Activated B cell treated with CpG ODN at 0.5 μM for 24 hours (primary cell): ENCODE measurements at regions of chr19 and their contacts with region 1.

Region 1: DNA sequence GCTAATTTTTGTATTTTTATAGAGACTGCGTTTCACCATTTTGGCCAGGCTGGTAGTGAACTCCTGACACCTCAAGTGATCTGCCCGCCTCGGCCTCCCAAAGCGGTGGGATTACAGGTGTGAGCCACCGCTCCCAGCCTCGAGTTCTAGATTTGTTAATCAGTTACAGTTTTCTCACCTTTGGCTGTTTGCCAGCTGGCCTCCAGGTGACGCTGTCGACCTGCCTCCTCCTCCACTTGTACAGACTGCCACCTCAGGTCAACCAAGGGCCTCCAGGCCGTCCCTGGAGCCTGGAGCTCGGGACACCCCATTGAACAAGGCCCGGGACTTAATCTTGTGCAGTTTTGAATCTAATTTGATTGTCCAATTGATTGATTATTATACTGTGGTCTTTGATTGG is 45.5 kb downstream of the IER2 start:
- DNase-seq: peak; percentile 57
- ATAC-seq: peak; percentile 79
- H3K4me3 Mint-ChIP-seq: no peak overlapping the region
- H3K27ac Mint-ChIP-seq: peak overlapping the region; percentile 63
- H3K4me1 Mint-ChIP-seq: peaks cover 29% of the 10 kb centered on the region
- H3K27me3 Mint-ChIP-seq: no peaks in the 10 kb centered on the region
- CTCF ChIP-seq: no peak

Region 2: GRCh38 chr19:12610540-12611360 is 584.9 kb before region 1 on chr19 and contains the starts of genes ZNF490 and ZNF791:
- CTCF ChIA-PET with region 1: no interaction called
- POLR2A ChIA-PET with region 1: no interaction called
- intact Hi-C with region 1: no loop called
- DNase-seq: peak; percentile 89
- ATAC-seq: peak; percentile 80
- H3K4me3 Mint-ChIP-seq: peak within 1 kb of the TSS; percentile 100
- H3K27ac Mint-ChIP-seq: peak within 1 kb of the TSS; percentile 100
- H3K4me1 Mint-ChIP-seq: peaks cover 66% of the 10 kb centered on the region
- H3K27me3 Mint-ChIP-seq: no peaks in the 10 kb centered on the region
- CTCF ChIP-seq: no peak
- total RNA-seq, gene ZNF490: 15.6 TPM in 2 replicates
- total RNA-seq, gene ZNF791: 37.5 and 46.1 TPM in 2 replicates

Region 3: GRCh38 chr19:12974301-12975220 is 221.1 kb before region 1 on chr19:
- CTCF ChIA-PET with region 1: interaction called, 6 read pairs
- POLR2A ChIA-PET with region 1: no interaction called
- intact Hi-C with region 1: loop called (anchors 5 kb)
- DNase-seq: no peak
- ATAC-seq: no peak
- H3K4me3 Mint-ChIP-seq: no peak overlapping the region
- H3K27ac Mint-ChIP-seq: no peak overlapping the region
- H3K4me1 Mint-ChIP-seq: peaks cover 6% of the 10 kb centered on the region
- H3K27me3 Mint-ChIP-seq: peaks cover 7% of the 10 kb centered on the region
- CTCF ChIP-seq: no peak

Region 4: GRCh38 chr19:13172068-13172896 is 23.4 kb before region 1 on chr19:
- CTCF ChIA-PET with region 1: interaction called, 33 read pairs
- POLR2A ChIA-PET with region 1: interaction called, 46 read pairs
- intact Hi-C with region 1: loop called (anchors 1 kb)
- DNase-seq: no peak
- ATAC-seq: peak; percentile 16
- H3K4me3 Mint-ChIP-seq: peak overlapping the region; percentile 69
- H3K27ac Mint-ChIP-seq: peak overlapping the region; percentile 88
- H3K4me1 Mint-ChIP-seq: peaks cover 76% of the 10 kb centered on the region
- H3K27me3 Mint-ChIP-seq: no peaks in the 10 kb centered on the region
- CTCF ChIP-seq: no peak

Region 5: DNA sequence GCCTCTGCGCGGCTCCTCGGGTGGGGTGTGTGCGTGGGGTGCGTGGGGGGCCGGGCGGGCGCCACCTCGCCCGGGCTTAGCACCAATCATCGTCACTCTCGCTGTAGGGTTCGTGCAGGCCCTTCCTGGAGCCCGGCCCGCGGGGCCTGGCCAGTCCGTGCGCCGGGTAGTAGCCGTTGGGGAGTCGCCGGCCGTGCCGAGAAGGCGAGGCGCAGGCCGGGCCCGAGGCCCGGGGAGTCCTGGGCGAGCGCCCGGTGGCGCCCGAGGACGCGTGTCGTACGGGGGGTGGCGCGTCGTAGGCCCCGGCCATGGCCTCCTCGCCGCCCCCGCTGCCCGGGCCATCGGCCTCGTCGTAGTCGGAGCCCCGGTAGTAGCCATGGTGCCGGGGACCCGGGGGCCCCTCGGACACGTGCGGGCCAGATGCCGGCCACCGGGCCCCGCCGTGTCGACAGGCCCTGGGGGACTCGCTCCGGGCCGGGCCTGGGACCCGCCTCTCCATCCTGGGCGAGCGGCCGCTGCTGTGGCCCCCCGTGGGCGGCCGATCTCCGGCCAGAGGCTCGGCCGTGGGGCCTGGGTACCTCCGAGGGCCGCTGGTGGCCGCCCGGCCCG is 11.7 kb after region 1 on chr19:
- CTCF ChIA-PET with region 1: interaction called, 10 read pairs
- POLR2A ChIA-PET with region 1: interaction called, 12 read pairs
- intact Hi-C with region 1: loop called (anchors 1 kb)
- DNase-seq: no peak
- ATAC-seq: no peak
- H3K4me3 Mint-ChIP-seq: no peak overlapping the region
- H3K27ac Mint-ChIP-seq: no peak overlapping the region
- H3K4me1 Mint-ChIP-seq: peaks cover 48% of the 10 kb centered on the region
- H3K27me3 Mint-ChIP-seq: no peaks in the 10 kb centered on the region
- CTCF ChIP-seq: no peak

Region 6: GRCh38 chr19:13234518-13234917 is 38.8 kb after region 1 on chr19:
- CTCF ChIA-PET with region 1: interaction called, 4 read pairs
- POLR2A ChIA-PET with region 1: no interaction called
- intact Hi-C with region 1: loop called (anchors 1 kb)
- DNase-seq: peak; percentile 27
- ATAC-seq: peak; percentile 90
- H3K4me3 Mint-ChIP-seq: peak overlapping the region; percentile 56
- H3K27ac Mint-ChIP-seq: peak overlapping the region; percentile 12
- H3K4me1 Mint-ChIP-seq: peaks cover 12% of the 10 kb centered on the region
- H3K27me3 Mint-ChIP-seq: peaks cover 6% of the 10 kb centered on the region
- CTCF ChIP-seq: no peak

Region 7: DNA sequence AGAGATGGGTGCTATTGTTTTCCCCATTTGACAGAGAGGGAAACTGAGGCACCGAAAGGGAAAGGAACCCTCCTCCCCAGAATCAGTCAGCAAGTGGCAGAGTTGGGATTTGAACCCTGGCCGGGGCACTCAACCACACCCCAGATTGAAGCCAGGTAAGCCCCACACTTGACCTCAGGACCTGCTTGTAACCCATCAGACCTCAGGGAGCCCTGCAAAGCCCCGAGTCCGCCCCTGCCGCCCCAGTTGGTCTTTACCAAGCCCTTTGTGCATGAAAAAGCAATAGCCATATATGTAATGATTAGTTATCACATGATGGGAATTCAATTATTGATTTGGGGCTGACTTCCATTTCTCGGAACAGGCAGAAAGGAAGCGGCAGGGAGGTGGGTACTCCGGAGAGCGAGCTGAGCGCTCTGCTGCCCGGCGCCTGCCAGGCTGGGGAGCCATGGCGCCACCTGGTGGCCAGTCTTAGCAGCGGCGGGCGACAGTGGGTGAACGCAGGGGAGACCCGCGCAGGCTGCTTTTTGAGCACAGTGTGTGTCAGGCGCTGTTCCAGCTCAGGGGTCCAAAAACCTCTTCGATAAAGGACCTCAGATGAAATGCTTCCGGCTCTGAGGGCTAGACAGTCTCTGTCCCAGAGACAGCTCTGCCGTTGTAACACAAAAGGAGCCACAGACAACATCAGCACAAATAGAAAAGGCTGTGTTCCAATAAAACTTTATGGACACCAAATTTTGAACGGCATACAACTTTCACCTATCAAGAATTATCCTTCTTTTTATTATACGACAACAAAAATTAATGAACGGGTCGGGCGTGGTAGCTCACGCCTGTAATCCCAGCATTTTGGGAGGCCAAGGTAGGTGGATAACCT is 393.5 kb after region 1 on chr19:
- CTCF ChIA-PET with region 1: interaction called, 10 read pairs
- POLR2A ChIA-PET with region 1: interaction called, 5 read pairs
- intact Hi-C with region 1: loop called (anchors 1 kb)
- DNase-seq: peak; percentile 82
- ATAC-seq: peak; percentile 95
- H3K4me3 Mint-ChIP-seq: no peak overlapping the region
- H3K27ac Mint-ChIP-seq: no peak overlapping the region
- H3K4me1 Mint-ChIP-seq: peaks cover 4% of the 10 kb centered on the region
- H3K27me3 Mint-ChIP-seq: peaks cover 15% of the 10 kb centered on the region
- CTCF ChIP-seq: peak; percentile 43